Left ventricle myocardium inferior (tissue), 1 donor: ENCODE measurements at regions of chr6 and their contacts with region 1.

Region 1: DNA sequence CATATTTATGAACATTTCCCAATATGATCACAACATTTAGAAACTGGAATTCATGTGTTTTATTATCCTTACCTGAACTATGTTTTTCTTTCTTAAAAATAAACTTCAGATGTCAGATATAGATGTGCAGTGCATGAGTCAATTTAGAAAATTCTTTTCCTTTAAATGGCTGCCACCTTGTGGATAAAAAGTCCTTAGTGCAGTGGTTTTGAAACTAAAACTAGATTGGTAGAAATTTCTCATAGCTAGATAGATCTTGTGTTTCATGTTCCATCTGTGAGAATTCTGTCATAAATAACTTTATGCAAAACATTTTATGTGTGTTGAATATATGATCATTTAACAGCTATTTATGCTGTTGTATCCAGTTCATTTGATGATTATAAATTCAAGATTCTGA is 134.9 kb downstream of the KLHL32 start:
- DNase-seq: no peak
- H3K4me3 ChIP-seq: no peak overlapping the region
- H3K27ac ChIP-seq: no peak overlapping the region
- H3K4me1 ChIP-seq: no peaks in the 10 kb centered on the region
- H3K27me3 ChIP-seq: peaks cover 8% of the 10 kb centered on the region
- CTCF ChIP-seq: peak; percentile 64

Region 2: GRCh38 chr6:96626759-96627364 is 432.6 kb before region 1 on chr6:
- intact Hi-C with region 1: loop called (anchors 5 kb)
- DNase-seq: no peak
- H3K4me3 ChIP-seq: no peak overlapping the region
- H3K27ac ChIP-seq: no peak overlapping the region
- H3K4me1 ChIP-seq: no peaks in the 10 kb centered on the region
- H3K27me3 ChIP-seq: no peaks in the 10 kb centered on the region
- CTCF ChIP-seq: peak; percentile 50

Region 3: DNA sequence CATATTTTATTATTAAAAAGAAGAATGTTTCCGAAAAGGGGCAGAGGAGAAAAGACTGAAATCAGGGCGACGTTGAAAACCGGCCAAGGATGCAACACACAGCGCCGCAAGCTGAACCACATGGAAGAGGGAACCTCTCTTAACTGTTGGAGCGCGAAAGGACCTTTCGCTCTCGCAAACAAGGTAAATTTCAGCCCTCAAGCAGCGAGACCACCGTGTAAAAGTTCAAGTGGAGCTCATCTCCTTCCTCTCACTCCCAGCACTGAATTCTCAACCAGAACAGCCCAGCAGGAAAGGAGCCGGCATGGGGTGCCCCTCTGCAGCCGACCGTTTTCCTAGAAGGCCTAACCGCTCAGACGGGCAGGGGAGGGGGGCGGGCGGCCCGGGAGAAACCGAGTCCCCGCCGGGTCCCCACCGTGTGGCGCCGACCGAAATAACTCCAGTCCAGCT is 222.8 kb before region 1 on chr6:
- intact Hi-C with region 1: no loop called
- DNase-seq: no peak
- H3K4me3 ChIP-seq: peak overlapping the region; percentile 85
- H3K27ac ChIP-seq: peak overlapping the region; percentile 22
- H3K4me1 ChIP-seq: peaks cover 19% of the 10 kb centered on the region
- H3K27me3 ChIP-seq: peaks cover 11% of the 10 kb centered on the region
- CTCF ChIP-seq: no peak